A549 (cell line): ENCODE measurements at regions of chr2 and their contacts with region 1.

Region 1: GRCh38 chr2:31523871-31524492 is 56.8 kb downstream of the SRD5A2 start:
- DNase-seq: peak; percentile 33 to 62
- ATAC-seq: peak; percentile 72 to 93; a peak in 4 of 6 replicates
- H3K4me3 ChIP-seq: no peak overlapping the region
- H3K27ac ChIP-seq: no peak overlapping the region; a peak in 1 of 6 replicates
- H3K4me1 ChIP-seq: no peaks in the 10 kb centered on the region
- CTCF ChIP-seq: peak; percentile 85
- EP300 ChIP-seq: no peak
- POLR2A ChIP-seq: no peak
- RAD21 ChIP-seq: peak; percentile 62 to 75

Region 2: DNA sequence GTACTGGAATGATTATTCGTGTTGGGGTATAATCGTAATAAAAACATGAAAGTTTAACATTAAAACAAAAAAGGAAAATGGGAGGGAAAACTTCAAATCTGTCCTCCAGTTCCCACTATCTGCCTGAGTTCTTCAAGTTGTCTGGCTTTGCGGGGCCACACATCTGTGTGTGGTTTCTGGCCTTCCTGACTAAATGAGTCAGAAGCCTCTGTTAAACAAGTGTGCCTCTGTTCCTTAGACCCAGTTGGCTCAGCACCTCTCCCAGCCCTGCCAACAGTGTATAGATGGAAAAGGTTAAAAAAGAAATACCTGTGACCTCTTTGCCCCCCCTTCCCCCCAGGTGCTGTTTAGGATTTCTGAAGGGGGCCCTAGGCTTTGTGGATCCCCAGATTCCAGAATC is 139.6 kb before region 1 on chr2:
- CTCF ChIA-PET with region 1: interaction called, 14 read pairs
- POLR2A ChIA-PET with region 1: no interaction called
- DNase-seq: peak; percentile 81 to 89
- ATAC-seq: peak; percentile 88
- H3K4me3 ChIP-seq: no peak overlapping the region
- H3K27ac ChIP-seq: peak overlapping the region; percentile 88 to 89
- H3K4me1 ChIP-seq: peaks cover 57% of the 10 kb centered on the region
- CTCF ChIP-seq: no peak
- EP300 ChIP-seq: no peak
- POLR2A ChIP-seq: no peak
- RAD21 ChIP-seq: no peak

Region 3: DNA sequence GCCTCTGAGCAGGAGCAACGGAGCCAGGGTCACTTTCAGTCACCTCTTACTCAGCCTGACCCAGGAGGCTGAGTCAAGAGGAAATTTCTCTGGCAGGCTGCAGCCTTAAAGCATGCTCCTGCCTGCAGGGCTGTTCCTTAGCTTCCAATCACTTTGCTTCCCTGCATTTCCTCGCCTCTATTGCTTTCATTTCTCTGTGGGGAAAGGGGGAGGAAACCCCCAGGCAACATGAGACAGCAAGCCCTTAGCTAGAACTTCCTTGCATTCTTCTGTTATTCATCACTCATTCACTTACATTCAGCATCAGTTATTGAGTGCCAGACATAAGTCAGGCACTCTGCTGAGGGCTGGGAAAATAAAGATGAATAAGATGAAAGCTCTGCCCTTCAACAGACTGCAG is 122.4 kb before region 1 on chr2:
- CTCF ChIA-PET with region 1: interaction called, 10 read pairs
- POLR2A ChIA-PET with region 1: no interaction called
- DNase-seq: peak; percentile 81 to 95
- ATAC-seq: peak; percentile 95 to 96
- H3K4me3 ChIP-seq: no peak overlapping the region
- H3K27ac ChIP-seq: peak overlapping the region; percentile 84 to 89
- H3K4me1 ChIP-seq: peaks cover 54% of the 10 kb centered on the region
- CTCF ChIP-seq: no peak
- EP300 ChIP-seq: peak; percentile 82 to 84; a peak in 3 of 5 replicates
- POLR2A ChIP-seq: no peak
- RAD21 ChIP-seq: peak in 1 of 2 experiments; percentile 21; a peak in 4 of 5 replicates

Region 4: GRCh38 chr2:31511376-31511775 is 12.6 kb before region 1 on chr2:
- CTCF ChIA-PET with region 1: interaction called, 19 read pairs
- POLR2A ChIA-PET with region 1: no interaction called
- DNase-seq: no peak
- ATAC-seq: no peak
- H3K4me3 ChIP-seq: no peak overlapping the region
- H3K27ac ChIP-seq: no peak overlapping the region
- H3K4me1 ChIP-seq: no peaks in the 10 kb centered on the region
- CTCF ChIP-seq: no peak
- EP300 ChIP-seq: no peak
- POLR2A ChIP-seq: no peak
- RAD21 ChIP-seq: no peak

Region 5: GRCh38 chr2:31534636-31535035 is 10.7 kb after region 1 on chr2:
- CTCF ChIA-PET with region 1: interaction called, 26 read pairs
- POLR2A ChIA-PET with region 1: no interaction called
- DNase-seq: no peak
- ATAC-seq: no peak
- H3K4me3 ChIP-seq: no peak overlapping the region
- H3K27ac ChIP-seq: no peak overlapping the region; a peak in 1 of 6 replicates
- H3K4me1 ChIP-seq: peaks cover 25% of the 10 kb centered on the region
- CTCF ChIP-seq: no peak
- EP300 ChIP-seq: no peak
- POLR2A ChIP-seq: no peak
- RAD21 ChIP-seq: no peak

Region 6: GRCh38 chr2:31581124-31581795 is 57.3 kb after region 1 on chr2:
- CTCF ChIA-PET with region 1: interaction called, 11 read pairs
- POLR2A ChIA-PET with region 1: no interaction called
- DNase-seq: no peak
- ATAC-seq: peak in 1 of 2 experiments; percentile 37; a peak in 3 of 6 replicates
- H3K4me3 ChIP-seq: no peak overlapping the region; the same call in 2 of the 3 replicates
- H3K27ac ChIP-seq: no peak overlapping the region
- H3K4me1 ChIP-seq: peaks cover 6% of the 10 kb centered on the region
- CTCF ChIP-seq: no peak
- EP300 ChIP-seq: no peak
- POLR2A ChIP-seq: no peak
- RAD21 ChIP-seq: no peak